ENCODE measurements at regions of chr1 and their contacts with region 1.

Region 1: GRCh38 chr1:198681831-198682759 is 43.3 kb downstream of the PTPRC start:
- DNase-seq: peak; percentile 95
- H3K4me3 Mint-ChIP-seq: peak overlapping the region; percentile 75
- H3K27ac Mint-ChIP-seq: peak overlapping the region; percentile 91
- H3K4me1 Mint-ChIP-seq: peaks cover 71% of the 10 kb centered on the region
- H3K27me3 Mint-ChIP-seq: no peaks in the 10 kb centered on the region

Region 2: DNA sequence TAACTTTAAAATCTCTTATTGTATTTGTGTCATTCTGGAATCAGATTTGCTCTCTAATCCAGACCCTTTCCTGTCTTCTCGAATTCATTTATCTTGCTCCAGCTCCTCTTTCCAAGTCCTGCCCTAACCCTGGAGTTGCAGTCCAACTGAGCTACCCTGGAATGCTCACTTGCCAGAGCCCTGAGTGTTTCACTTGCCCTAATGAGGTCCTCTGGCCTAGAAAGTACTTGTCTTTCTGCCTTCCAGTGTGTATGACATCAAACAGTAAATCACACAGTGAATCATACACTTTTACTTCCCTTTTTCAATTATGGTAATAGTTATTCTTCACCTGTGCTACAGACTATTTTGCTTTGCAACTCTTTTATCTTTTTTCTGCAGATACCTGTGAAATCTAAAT is 428.4 kb before region 1 on chr1:
- intact Hi-C with region 1: loop called (anchors 5 kb)
- DNase-seq: peak; percentile 58
- H3K4me3 Mint-ChIP-seq: peak overlapping the region; percentile 21
- H3K27ac Mint-ChIP-seq: peak overlapping the region; percentile 83
- H3K4me1 Mint-ChIP-seq: peaks cover 29% of the 10 kb centered on the region
- H3K27me3 Mint-ChIP-seq: no peaks in the 10 kb centered on the region

Region 3: DNA sequence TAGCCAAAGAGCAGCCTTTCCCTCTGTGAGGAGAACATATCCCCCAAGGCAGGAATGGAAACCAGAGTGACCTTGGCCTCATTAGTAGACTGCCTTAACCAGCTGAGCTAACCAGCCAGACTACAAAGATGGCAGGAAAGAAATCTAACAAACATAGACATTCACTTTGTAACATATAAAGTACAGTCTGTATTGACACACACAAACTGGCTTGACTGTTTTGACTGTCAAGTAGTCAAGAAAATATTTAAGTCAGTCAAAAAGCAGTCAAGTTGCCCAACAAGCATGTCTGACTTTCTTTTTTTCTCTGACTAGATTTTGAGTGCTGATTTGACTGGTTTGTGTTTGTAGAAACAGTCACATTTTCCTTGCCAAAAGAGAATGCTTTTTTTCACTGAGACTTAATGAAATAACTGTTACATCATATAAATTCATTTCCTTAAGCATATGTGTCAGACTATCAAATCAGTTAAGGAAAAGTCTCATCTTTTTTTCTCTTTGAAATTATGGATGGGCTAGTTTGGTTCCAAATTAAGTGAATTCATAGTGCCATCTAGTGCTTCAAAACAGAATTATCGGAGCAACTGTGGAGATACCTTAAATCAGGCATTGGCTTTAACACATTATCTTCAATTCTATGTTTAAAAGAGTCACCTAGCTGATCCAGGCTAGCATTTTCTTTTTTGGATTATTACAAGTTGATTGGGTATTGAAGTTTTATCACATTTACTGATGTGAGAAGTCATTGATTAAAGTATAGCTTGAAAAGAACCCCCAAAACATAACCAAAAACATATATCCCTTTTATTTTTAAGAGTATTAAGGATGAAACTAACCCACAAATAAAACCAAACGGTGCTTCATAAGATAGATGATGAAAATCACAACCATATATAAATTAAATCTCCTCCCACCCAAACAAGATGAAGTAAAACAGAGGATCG is 216.6 kb before region 1 on chr1:
- intact Hi-C with region 1: loop called (anchors 1 kb)
- DNase-seq: peak; percentile 62
- H3K4me3 Mint-ChIP-seq: no peak overlapping the region
- H3K27ac Mint-ChIP-seq: no peak overlapping the region
- H3K4me1 Mint-ChIP-seq: peaks cover 4% of the 10 kb centered on the region
- H3K27me3 Mint-ChIP-seq: peaks cover 2% of the 10 kb centered on the region

Region 4: GRCh38 chr1:198612471-198613260 is 69.4 kb before region 1 on chr1:
- intact Hi-C with region 1: loop called (anchors 2 kb)
- DNase-seq: peak; percentile 58
- H3K4me3 Mint-ChIP-seq: peak overlapping the region; percentile 83
- H3K27ac Mint-ChIP-seq: peak overlapping the region; percentile 94
- H3K4me1 Mint-ChIP-seq: peaks cover 59% of the 10 kb centered on the region
- H3K27me3 Mint-ChIP-seq: no peaks in the 10 kb centered on the region

Region 5: DNA sequence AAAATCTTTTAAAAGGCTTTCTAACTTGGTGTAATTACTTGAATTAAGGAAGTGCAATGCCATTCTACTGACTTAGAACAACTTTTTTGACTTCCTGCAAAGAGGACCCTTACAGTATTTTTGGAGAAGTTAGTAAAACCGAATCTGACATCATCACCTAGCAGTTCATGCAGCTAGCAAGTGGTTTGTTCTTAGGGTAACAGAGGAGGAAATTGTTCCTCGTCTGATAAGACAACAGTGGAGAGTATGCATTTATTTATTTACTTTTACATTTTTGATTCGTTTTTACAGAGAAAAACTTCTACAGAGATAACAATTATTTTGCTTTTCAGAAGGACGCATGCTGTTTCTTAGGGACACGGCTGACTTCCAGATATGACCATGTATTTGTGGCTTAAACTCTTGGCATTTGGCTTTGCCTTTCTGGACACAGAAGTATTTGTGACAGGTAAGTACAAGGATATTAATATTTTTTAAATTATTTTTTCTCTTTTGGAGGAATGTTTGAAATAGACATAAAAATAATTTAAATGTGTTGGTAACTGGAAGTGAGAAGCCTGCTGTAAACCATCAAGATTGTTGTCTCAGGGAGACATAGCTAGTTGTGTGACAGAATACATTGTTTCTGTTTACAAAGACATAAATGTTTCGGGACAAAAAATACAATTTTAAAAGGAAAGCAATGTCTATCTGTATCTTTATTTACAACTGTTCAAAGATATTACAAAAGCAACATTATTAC is 43.0 kb before region 1 on chr1 and contains the start of gene PTPRC:
- intact Hi-C with region 1: loop called (anchors 1 kb)
- DNase-seq: peak; percentile 84
- H3K4me3 Mint-ChIP-seq: peak within 1 kb of the TSS; percentile 89
- H3K27ac Mint-ChIP-seq: peak within 1 kb of the TSS; percentile 95
- H3K4me1 Mint-ChIP-seq: peaks cover 47% of the 10 kb centered on the region
- H3K27me3 Mint-ChIP-seq: no peaks in the 10 kb centered on the region
- total RNA-seq, gene PTPRC: 436 and 438 TPM in 2 replicates

Region 6: DNA sequence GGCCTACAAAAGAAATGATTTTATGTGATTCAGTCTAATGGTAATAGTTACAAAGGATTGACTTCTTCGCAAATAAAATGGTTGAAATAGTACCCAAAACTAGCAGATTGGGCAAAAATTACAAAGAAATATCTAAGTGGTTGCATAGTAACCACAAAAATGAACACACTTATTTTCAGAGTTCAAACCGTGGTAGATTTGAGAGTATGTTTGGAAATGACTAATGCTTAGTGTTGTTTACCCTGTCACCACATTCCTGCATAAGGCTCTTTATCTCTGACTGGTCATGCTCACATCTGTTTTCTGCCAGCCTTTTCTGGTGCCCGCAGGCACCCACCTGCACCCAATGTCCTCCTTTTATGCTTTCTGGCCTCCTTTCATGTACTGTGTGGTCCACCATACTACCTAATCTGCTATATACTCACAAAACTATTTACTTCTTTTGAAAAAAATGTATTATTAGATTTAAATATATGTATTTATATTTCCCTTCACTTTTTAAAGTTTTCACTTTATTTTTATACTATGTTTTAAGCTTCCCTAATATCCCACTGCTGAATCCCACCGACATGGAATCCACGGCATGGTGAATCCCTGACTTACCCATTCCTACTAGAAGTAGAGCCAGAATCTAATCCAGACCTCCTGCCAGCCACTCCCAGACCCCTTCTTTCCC is 12.9 kb before region 1 on chr1:
- intact Hi-C with region 1: loop called (anchors 1 kb)
- DNase-seq: peak; percentile 88
- H3K4me3 Mint-ChIP-seq: peak overlapping the region; percentile 73
- H3K27ac Mint-ChIP-seq: peak overlapping the region; percentile 94
- H3K4me1 Mint-ChIP-seq: peaks cover 79% of the 10 kb centered on the region
- H3K27me3 Mint-ChIP-seq: no peaks in the 10 kb centered on the region

Measured in activated CD4-positive, alpha-beta T cell treated with anti-CD3 and anti-CD28 coated beads, Interleukin-2, amount 10 ng/mL, durations not matched to agents 24 days and 14 days (primary cell).